A673 (cell line): ENCODE measurements at regions of chr13 and their contacts with region 1.

Region 1: GRCh38 chr13:78137404-78138142 is 218.9 kb upstream of the EDNRB start:
- DNase-seq: peak; percentile 86
- H3K4me3 ChIP-seq: no peak overlapping the region
- H3K27ac ChIP-seq: no peak overlapping the region
- H3K4me1 ChIP-seq: no peaks in the 10 kb centered on the region
- H3K27me3 ChIP-seq: no peaks in the 10 kb centered on the region
- CTCF ChIP-seq: peak; percentile 76

Region 2: DNA sequence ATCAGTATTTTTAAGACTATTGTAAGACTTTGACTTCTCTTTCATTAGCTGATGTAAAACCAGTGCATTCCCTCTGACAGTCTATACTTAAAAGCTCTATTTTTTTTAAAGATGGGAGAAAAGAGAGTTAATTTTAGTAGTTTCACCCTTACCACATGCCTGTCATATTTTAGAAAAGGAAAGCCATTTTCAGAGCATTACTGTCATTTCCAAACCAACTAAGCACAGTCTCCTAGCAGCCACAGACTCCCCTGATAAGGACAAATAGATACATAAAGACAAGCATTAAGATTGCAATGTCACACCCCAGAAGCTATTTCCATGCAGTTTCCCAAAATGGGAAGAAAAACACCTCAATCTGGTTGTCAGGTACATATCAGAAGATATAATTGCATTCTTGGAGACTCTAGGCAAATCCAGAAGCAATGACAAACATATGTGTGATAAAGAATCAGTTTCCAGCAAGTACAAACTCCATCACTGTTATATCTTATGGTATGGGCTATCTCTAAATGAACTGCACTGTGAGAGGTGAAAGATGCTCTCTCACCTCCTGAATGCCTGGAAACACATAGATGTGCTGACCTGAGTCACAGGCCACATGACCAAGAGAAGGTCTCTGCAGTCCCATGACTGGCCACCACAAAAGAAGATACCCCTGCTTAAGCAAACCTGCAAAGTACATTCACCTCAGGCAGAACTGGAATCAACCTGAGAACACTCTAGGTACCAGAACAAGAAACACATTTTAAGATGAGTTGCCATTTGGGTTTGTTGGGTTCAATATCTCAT is 162.5 kb after region 1 on chr13:
- CTCF ChIA-PET with region 1: no interaction called
- POLR2A ChIA-PET with region 1: no interaction called
- intact Hi-C with region 1: loop called (anchors 5 kb)
- DNase-seq: no peak
- H3K4me3 ChIP-seq: no peak overlapping the region
- H3K27ac ChIP-seq: no peak overlapping the region
- H3K4me1 ChIP-seq: no peaks in the 10 kb centered on the region
- H3K27me3 ChIP-seq: peaks cover 4% of the 10 kb centered on the region
- CTCF ChIP-seq: no peak

Region 3: GRCh38 chr13:78787190-78787589 is 649.6 kb after region 1 on chr13:
- CTCF ChIA-PET with region 1: no interaction called
- POLR2A ChIA-PET with region 1: no interaction called
- intact Hi-C with region 1: loop called (anchors 10 kb)
- DNase-seq: peak; percentile 69
- H3K4me3 ChIP-seq: no peak overlapping the region
- H3K27ac ChIP-seq: peak overlapping the region; percentile 92
- H3K4me1 ChIP-seq: peaks cover 69% of the 10 kb centered on the region
- H3K27me3 ChIP-seq: peaks cover 24% of the 10 kb centered on the region
- CTCF ChIP-seq: no peak

Region 4: DNA sequence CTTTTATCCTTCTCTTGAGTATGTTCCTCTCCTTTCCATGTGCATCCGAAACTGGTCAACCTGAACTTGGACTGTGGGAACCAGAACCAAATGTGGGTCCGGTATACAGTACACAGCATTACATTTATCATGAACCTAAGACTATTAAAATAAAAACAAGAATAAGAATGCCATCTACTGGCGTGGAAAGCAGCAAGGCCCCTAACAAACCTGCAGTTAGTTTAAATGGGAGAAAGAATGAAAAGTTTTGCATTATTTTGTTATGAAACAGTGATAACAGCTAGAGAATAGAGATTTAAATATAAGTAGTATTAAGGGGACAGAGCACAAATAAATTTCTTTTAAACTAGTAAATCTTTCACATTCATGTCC is 1109.0 kb after region 1 on chr13:
- CTCF ChIA-PET with region 1: no interaction called
- POLR2A ChIA-PET with region 1: no interaction called
- intact Hi-C with region 1: loop called (anchors 5 kb)
- DNase-seq: peak; percentile 3
- H3K4me3 ChIP-seq: no peak overlapping the region
- H3K27ac ChIP-seq: no peak overlapping the region
- H3K4me1 ChIP-seq: no peaks in the 10 kb centered on the region
- H3K27me3 ChIP-seq: no peaks in the 10 kb centered on the region
- CTCF ChIP-seq: peak; percentile 40